ENCODE measurements at regions of chr16 and their contacts with region 1.

Region 1: GRCh38 chr16:19745286-19746010 is 27.4 kb downstream of the IQCK start:
- DNase-seq: peak; percentile 62
- H3K4me3 ChIP-seq: no peak overlapping the region
- H3K27ac ChIP-seq: no peak overlapping the region
- H3K4me1 ChIP-seq: peaks cover 4% of the 10 kb centered on the region
- H3K27me3 ChIP-seq: no peaks in the 10 kb centered on the region

Region 2: DNA sequence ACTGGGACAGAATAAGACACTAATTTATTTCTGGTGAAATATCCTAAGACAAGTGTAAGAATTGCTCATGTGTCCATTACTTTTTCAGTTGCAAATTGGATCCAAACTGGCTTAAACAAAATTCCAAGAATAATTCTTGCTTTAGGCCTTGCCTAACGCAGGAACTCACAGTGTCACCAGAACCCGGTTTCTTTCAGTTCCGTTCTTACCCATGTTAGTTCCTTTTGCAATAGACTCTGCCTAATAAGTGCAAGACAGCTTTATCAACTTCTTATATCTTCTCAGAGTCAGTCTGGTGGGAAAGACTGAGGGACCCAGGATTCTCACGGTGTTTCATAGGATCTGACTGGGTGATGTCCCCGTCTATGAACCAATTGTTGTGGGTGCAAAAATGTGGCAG is 248.3 kb before region 1 on chr16:
- in situ Hi-C with region 1: no loop called
- DNase-seq: no peak
- H3K4me3 ChIP-seq: no peak overlapping the region
- H3K27ac ChIP-seq: no peak overlapping the region
- H3K4me1 ChIP-seq: no peaks in the 10 kb centered on the region
- H3K27me3 ChIP-seq: no peaks in the 10 kb centered on the region

Region 3: DNA sequence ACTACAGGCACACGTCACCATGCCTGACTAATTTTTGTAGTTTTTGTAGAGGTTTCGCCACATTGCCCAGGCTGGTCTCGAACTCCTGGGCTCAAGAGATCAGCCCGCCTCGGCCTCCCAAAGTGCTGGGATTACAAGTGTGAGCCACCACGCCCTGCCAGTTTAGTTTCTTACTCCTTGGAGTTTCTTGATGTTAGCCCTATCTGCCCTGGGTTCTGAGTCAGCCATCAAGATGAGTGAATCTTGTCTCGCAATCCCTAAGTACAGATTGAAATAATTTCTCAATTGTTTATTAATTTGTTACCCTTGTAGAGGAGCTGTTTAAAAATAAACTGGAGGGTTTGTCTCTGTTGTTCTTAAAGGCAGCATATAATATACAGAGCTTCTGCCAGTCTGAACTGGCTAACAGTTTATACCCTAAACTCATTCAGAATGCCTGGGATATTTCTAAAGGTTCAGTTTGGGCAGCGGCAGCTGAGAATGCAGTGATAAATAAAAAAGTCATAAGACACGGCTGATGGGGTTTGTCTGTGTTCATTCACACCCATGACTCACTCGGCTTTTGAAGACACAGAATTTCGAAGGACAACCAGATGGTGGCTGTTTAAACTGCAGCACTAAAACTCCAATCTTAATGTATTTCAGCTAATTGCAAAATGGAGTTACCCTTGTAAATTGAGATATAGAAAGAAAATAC is 99.6 kb after region 1 on chr16:
- in situ Hi-C with region 1: loop called (anchors 25 kb)
- DNase-seq: peak; percentile 96
- H3K4me3 ChIP-seq: 0 out of 2 replicates have a peak overlapping the region, but pooled peaks have one; percentile 7
- H3K27ac ChIP-seq: peak overlapping the region; percentile 84
- H3K4me1 ChIP-seq: no peaks in the 10 kb centered on the region
- H3K27me3 ChIP-seq: no peaks in the 10 kb centered on the region

Region 4: GRCh38 chr16:19856120-19856519 is 110.7 kb after region 1 on chr16:
- in situ Hi-C with region 1: no loop called
- DNase-seq: no peak
- H3K4me3 ChIP-seq: no peak overlapping the region
- H3K27ac ChIP-seq: no peak overlapping the region
- H3K4me1 ChIP-seq: no peaks in the 10 kb centered on the region
- H3K27me3 ChIP-seq: no peaks in the 10 kb centered on the region

Measured in GM23248 (cell line).